Activated CD4-positive, alpha-beta T cell treated with anti-CD3 and anti-CD28 coated beads for 36 hours (primary cell): ENCODE measurements at regions of chr18 and their contacts with region 1.

Region 1: DNA sequence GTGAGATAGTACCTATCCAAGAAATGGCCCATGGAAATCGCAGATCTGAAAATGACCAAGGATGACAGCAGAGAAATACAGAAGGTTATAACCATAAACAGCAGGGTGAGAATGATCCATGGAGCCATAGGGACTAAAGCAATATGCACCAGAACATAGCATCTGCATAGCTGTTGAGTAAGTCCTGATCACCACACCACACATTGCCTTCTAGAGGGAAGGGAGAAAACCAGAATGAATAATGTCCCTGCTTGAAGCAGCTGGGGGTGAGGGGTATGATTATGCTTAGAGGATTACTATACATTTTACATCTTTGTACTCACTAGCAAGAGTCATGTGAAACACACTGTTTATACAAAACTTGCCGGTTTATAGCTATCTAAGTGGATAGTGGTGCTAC is 350.4 kb downstream of the MBD2 start:
- DNase-seq: no peak
- ATAC-seq: no peak
- H3K4me3 Mint-ChIP-seq: no peak overlapping the region
- H3K27ac Mint-ChIP-seq: no peak overlapping the region
- H3K4me1 Mint-ChIP-seq: no peaks in the 10 kb centered on the region
- H3K27me3 Mint-ChIP-seq: peaks cover 2% of the 10 kb centered on the region

Region 2: DNA sequence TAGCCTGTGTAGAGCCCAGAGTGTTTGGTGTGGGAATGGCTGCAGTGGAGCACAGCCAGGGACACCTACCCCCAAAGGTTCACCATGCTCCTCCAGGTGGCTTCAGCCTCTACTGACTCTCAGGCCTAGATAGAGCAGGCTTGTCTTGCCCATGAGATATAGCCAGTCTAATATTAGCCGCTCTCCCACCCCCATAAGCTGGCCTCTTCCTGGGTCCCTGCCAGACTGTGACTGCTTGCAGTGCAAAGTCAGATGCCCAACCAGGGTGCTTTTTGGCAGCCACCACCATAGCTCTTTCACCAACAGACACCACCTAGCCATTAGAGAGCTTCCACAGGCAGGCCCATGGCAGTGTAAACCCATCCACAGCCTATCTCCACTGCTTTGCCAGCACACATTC is 54.9 kb before region 1 on chr18:
- CTCF ChIA-PET with region 1: no interaction called
- POLR2A ChIA-PET with region 1: no interaction called
- intact Hi-C with region 1: no loop called
- DNase-seq: no peak
- ATAC-seq: no peak
- H3K4me3 Mint-ChIP-seq: no peak overlapping the region
- H3K27ac Mint-ChIP-seq: no peak overlapping the region
- H3K4me1 Mint-ChIP-seq: no peaks in the 10 kb centered on the region
- H3K27me3 Mint-ChIP-seq: peaks cover 3% of the 10 kb centered on the region

Region 3: GRCh38 chr18:53909668-53910067 is 35.6 kb after region 1 on chr18:
- CTCF ChIA-PET with region 1: no interaction called
- POLR2A ChIA-PET with region 1: no interaction called
- intact Hi-C with region 1: loop called in 1 of 2 experiments (anchors 1 kb)
- DNase-seq: peak; percentile 43
- ATAC-seq: no peak
- H3K4me3 Mint-ChIP-seq: no peak overlapping the region
- H3K27ac Mint-ChIP-seq: no peak overlapping the region
- H3K4me1 Mint-ChIP-seq: no peaks in the 10 kb centered on the region
- H3K27me3 Mint-ChIP-seq: peaks cover 2% of the 10 kb centered on the region

Region 4: DNA sequence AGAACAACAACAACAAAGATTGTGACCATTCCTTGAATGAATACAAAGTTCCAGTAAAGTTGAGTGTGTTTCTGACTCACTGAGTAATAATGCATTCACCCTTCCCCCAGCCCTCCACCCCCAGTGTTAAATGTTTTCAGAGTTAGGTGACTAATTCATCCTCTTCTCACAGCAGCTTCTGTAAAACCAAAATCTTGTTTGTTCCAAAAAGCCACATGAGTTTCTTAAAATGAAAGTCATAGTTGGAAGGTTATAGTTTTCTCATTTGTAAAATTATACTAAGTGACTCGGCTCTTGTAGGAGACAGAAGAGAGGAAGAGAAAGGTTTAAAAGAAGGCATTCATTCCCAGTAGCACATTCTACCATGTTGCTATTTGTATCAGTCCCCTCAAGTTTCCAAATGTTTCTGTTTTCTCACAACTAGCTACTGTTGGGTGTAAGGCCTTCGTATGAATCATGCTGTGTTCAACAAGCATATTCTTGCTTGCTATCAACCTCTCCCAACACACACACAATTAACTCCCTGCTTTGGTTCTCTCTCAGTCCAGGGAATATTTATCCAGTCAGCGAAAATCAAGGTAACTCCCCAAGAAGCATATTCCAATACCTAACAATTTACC is 275.1 kb after region 1 on chr18:
- CTCF ChIA-PET with region 1: no interaction called
- POLR2A ChIA-PET with region 1: no interaction called
- intact Hi-C with region 1: no loop called
- DNase-seq: peak; percentile 83
- ATAC-seq: peak; percentile 82
- H3K4me3 Mint-ChIP-seq: peak overlapping the region; percentile 47
- H3K27ac Mint-ChIP-seq: peak overlapping the region; percentile 94
- H3K4me1 Mint-ChIP-seq: peaks cover 56% of the 10 kb centered on the region
- H3K27me3 Mint-ChIP-seq: no peaks in the 10 kb centered on the region